Activated T-helper 1 cell treated with anti-CD3 and anti-CD28 coated beads, Interleukin-12 subunit alpha, Interleukin-12 subunit beta, Interleukin-2, Interleukin-4 antibody, amounts not matched to agents 30 ng/mL and 10 ng/mL and 1 ng/mL, durations not matched to agents 14 hours and 24 hours and 36 hours (primary cell): ENCODE measurements at regions of chr1 and their contacts with region 1.

Region 1: DNA sequence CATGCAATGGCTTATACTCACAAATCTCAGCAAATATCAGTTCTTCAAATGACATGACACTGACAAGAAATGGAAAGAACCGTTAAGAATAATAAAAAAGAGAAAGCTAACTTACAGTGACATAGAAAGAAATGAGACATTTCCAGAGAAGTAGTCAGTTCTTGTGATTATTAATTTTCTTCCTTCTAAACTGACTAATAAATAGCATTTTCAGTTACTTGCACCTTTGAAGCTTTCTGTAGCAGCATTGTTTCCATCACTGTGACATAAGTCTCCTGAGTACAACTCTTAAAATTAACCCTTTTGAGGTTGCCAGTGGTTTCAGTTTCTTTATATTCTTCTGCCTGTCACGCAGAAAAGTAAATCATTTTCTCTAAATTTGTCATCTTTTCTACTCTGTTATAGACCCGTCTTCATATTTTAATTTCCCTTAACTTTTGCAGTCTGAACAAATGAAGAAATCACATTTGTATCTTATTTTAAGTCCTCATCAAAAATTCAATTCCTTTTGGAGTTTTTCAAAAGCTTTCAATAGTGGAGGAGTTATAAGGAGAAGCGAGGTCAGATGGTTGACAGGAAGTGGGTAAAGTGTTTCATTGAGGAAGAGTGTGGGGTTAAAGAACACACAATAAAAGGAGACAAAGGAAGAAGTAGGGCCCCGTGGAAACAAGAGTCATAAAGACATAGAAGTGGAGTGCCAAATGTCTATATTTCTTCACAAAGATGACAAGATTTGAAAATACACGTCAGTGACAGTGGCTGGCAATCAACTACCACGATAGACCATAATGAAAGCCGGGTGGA is 57.9 kb upstream of the S1PR1 start:
- DNase-seq: peak; percentile 27
- H3K4me3 Mint-ChIP-seq: peak overlapping the region; percentile 76
- H3K27ac Mint-ChIP-seq: peak overlapping the region; percentile 98
- H3K4me1 Mint-ChIP-seq: peaks cover 65% of the 10 kb centered on the region
- H3K27me3 Mint-ChIP-seq: no peaks in the 10 kb centered on the region

Region 2: DNA sequence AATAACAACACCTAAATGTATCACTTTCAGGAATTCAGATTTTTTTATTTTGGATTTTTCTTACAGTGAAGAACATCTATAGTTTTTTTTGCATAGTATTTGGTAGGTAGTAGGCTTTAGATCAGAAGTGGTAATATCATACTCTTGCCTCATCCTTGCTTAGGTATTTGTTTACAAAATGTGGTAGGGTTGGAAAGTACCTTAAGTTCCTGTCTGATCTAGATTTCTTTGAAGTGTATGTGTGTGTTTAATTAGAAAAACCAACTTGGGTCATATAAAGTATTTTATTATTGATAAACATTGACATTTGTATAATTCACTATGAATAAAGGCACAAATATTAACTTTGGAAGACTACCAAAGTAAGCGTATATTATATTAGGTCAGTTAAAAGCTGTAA is 726.2 kb before region 1 on chr1:
- intact Hi-C with region 1: loop called (anchors 2 kb)
- DNase-seq: no peak
- H3K4me3 Mint-ChIP-seq: no peak overlapping the region
- H3K27ac Mint-ChIP-seq: peak overlapping the region; percentile 59
- H3K4me1 Mint-ChIP-seq: peaks cover 77% of the 10 kb centered on the region
- H3K27me3 Mint-ChIP-seq: no peaks in the 10 kb centered on the region

Region 3: DNA sequence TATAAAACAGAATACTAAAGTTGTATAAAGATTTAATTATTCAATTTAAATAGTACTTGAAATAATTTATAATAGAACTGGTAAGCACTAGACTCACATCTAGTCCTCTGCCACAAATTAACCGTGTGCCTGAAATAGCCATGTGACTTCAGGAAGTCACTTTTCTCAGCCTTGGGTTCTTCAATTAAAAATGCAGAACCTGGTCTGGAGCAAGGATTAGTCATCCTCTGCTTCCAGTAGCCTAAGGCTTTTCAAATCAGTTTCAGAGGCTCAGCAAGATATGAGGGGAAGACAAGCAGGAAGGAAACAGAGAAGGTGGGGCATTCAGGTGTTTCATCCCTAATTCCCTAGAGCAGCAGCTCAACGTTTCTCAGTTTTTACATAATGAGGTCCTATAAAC is 176.3 kb before region 1 on chr1:
- intact Hi-C with region 1: loop called (anchors 1 kb)
- DNase-seq: no peak
- H3K4me3 Mint-ChIP-seq: no peak overlapping the region
- H3K27ac Mint-ChIP-seq: no peak overlapping the region
- H3K4me1 Mint-ChIP-seq: peaks cover 43% of the 10 kb centered on the region
- H3K27me3 Mint-ChIP-seq: no peaks in the 10 kb centered on the region

Region 4: DNA sequence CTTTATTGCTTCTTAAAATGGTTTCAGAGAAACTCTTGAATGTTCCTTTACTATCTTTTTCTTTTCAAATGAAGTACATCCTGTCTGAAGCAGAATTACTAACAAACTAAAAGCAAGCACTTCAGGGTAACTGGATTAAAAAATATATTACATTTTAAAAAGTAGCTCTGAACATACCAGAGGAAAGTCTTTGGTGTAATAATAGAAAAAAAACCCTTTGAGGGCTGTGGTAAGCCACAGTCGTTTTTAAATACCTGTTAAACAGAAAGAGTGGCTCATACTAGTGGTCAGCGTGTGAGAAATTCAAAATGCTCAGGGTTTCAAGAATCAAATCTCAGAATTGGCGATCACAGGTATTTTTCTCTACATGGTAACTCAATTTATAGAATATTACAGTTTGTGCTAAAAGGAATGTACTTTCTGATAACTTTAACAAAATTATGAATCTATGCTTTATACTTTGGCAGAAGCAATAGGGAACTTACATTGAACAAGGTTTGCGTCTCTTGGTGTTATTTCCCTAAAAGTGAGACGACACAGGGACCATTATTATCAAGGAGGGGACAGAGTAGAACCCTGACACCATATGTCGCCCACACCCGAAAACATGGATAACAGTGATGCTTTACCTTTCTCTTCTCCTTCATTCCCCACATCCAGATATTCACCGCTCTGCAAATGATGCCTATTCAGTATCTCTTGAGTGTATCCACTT is 56.3 kb before region 1 on chr1:
- intact Hi-C with region 1: loop called (anchors 1 kb)
- DNase-seq: no peak
- H3K4me3 Mint-ChIP-seq: peak overlapping the region; percentile 23
- H3K27ac Mint-ChIP-seq: peak overlapping the region; percentile 11
- H3K4me1 Mint-ChIP-seq: peaks cover 39% of the 10 kb centered on the region
- H3K27me3 Mint-ChIP-seq: peaks cover 4% of the 10 kb centered on the region

Region 5: DNA sequence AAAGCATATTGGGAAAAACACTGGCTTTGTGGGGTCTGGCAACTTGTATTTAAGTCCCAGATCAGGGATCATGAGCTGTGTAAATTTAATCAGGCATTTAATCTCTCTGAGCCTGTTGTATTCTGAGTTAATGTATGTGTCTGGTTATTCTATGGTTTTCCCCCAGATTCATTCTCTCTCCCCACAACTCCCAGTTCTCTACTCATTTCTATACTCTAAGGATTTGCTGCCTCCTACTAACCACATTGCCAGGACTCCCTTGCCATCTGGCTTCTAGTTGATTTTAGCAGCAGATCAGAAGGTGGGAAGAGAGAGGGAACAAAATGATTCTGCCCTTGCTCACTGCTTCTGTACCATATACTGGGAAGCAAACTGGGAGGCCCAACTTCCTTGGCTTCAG is 26.6 kb after region 1 on chr1:
- intact Hi-C with region 1: loop called (anchors 1 kb)
- DNase-seq: no peak
- H3K4me3 Mint-ChIP-seq: no peak overlapping the region
- H3K27ac Mint-ChIP-seq: peak overlapping the region; percentile 18
- H3K4me1 Mint-ChIP-seq: peaks cover 19% of the 10 kb centered on the region
- H3K27me3 Mint-ChIP-seq: no peaks in the 10 kb centered on the region

Region 6: DNA sequence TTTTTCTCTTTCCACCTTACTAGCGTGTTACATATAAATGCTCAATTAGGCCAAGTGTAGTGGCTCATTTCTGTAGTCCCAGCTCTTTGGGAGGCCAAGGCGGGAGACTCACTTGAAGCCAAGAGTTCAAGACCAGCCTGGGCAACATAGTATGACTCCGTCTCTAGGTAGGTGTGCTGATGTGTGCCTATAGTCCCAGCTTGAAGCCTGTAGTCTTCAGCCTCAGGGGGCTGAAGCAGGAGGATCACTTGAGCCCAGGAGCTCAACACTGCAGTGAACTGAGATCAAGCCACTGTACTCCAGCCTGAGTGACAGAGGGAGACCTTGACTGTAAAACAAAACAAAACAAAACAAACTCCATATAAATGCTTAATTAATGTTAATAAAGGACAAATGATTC is 170.5 kb after region 1 on chr1:
- intact Hi-C with region 1: no loop called
- DNase-seq: no peak
- H3K4me3 Mint-ChIP-seq: no peak overlapping the region
- H3K27ac Mint-ChIP-seq: no peak overlapping the region
- H3K4me1 Mint-ChIP-seq: peaks cover 43% of the 10 kb centered on the region
- H3K27me3 Mint-ChIP-seq: peaks cover under 1% of the 10 kb centered on the region

Region 7: GRCh38 chr1:101388904-101389546 is 210.1 kb after region 1 on chr1:
- intact Hi-C with region 1: no loop called
- DNase-seq: peak; percentile 26
- H3K4me3 Mint-ChIP-seq: no peak overlapping the region
- H3K27ac Mint-ChIP-seq: no peak overlapping the region
- H3K4me1 Mint-ChIP-seq: peaks cover 19% of the 10 kb centered on the region
- H3K27me3 Mint-ChIP-seq: peaks cover 5% of the 10 kb centered on the region

Region 8: DNA sequence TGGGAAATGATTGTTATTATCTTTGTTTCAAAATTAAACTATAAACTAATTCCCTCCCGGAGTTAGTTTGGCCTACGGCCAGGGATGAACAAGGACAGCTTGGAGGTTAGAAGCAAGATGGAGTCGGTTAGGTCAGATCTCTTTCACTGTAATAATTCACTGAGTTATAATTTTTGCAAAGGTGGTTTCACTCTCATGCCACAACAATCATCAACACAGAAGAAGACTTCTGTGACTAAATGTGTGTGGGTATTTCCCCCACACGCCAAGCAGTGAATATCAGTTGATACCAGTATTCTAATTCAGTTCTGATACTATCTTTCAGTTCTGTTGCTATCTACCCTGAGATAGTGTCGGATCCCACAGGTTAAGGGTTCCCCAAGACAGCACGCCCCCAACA is 273.0 kb after region 1 on chr1:
- intact Hi-C with region 1: loop called (anchors 5 kb)
- DNase-seq: no peak
- H3K4me3 Mint-ChIP-seq: no peak overlapping the region
- H3K27ac Mint-ChIP-seq: no peak overlapping the region
- H3K4me1 Mint-ChIP-seq: peaks cover 34% of the 10 kb centered on the region
- H3K27me3 Mint-ChIP-seq: peaks cover 7% of the 10 kb centered on the region